PC-3 (cell line): ENCODE measurements at regions of chr7 and their contacts with region 1.

Region 1: GRCh38 chr7:83410989-83411591 is 237.8 kb downstream of the SEMA3E start:
- DNase-seq: peak; percentile 64
- ATAC-seq: no peak
- H3K4me3 ChIP-seq: no peak overlapping the region
- H3K27ac ChIP-seq: no peak overlapping the region
- H3K4me1 ChIP-seq: no peaks in the 10 kb centered on the region
- H3K27me3 ChIP-seq: no peaks in the 10 kb centered on the region
- CTCF ChIP-seq: peak; percentile 76

Region 2: GRCh38 chr7:83325083-83325482 is 86.0 kb before region 1 on chr7:
- CTCF ChIA-PET with region 1: no interaction called
- POLR2A ChIA-PET with region 1: no interaction called
- intact Hi-C with region 1: no loop called
- DNase-seq: no peak
- ATAC-seq: no peak
- H3K4me3 ChIP-seq: no peak overlapping the region
- H3K27ac ChIP-seq: no peak overlapping the region
- H3K4me1 ChIP-seq: no peaks in the 10 kb centered on the region
- H3K27me3 ChIP-seq: peaks cover 35% of the 10 kb centered on the region
- CTCF ChIP-seq: no peak

Region 3: DNA sequence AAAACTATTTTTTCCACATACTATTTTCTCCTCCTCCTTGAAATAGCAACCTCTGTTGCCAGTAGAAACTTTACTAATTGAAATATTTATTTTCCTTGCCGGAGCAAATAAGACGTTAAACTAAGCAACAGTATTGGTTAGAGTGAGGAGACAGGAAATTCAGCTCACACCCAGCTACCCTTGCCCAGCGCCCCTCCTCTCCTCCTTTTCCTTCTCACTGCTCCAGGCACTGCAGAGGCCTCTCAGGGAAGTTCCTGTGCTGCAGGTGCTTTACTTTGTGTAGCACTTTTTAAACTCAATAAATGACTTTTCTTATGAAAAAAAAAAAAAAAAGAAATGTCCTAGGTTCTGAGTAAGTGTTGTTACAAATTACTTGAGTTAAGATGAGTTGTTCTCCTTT is 103.9 kb after region 1 on chr7:
- CTCF ChIA-PET with region 1: no interaction called
- POLR2A ChIA-PET with region 1: no interaction called
- intact Hi-C with region 1: loop called (anchors 1 kb)
- DNase-seq: no peak
- ATAC-seq: no peak
- H3K4me3 ChIP-seq: no peak overlapping the region
- H3K27ac ChIP-seq: no peak overlapping the region
- H3K4me1 ChIP-seq: no peaks in the 10 kb centered on the region
- H3K27me3 ChIP-seq: no peaks in the 10 kb centered on the region
- CTCF ChIP-seq: no peak